ENCODE measurements at regions of chr6 and their contacts with region 1.

Region 1: DNA sequence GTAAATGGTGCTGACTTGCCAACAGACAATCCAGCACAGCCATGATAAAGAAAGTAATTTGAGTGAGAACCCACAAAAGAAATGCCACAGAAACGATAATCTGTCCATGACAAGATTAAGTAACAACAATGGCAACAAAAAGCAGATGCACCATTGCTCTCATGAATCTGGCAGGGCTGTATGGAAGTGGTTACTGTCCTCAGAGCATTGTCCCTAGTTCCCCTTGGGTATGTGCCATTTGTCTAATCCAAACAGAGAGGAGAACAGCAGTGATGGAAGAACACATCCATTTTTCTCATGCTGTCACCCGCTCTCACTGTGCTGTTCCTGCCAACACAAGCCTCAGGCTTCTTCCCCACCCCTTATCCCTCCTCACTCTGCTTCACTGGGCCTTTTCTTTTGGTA is 65.8 kb downstream of the REV3L start:
- DNase-seq: no peak
- ATAC-seq: peak; percentile 92

Region 2: DNA sequence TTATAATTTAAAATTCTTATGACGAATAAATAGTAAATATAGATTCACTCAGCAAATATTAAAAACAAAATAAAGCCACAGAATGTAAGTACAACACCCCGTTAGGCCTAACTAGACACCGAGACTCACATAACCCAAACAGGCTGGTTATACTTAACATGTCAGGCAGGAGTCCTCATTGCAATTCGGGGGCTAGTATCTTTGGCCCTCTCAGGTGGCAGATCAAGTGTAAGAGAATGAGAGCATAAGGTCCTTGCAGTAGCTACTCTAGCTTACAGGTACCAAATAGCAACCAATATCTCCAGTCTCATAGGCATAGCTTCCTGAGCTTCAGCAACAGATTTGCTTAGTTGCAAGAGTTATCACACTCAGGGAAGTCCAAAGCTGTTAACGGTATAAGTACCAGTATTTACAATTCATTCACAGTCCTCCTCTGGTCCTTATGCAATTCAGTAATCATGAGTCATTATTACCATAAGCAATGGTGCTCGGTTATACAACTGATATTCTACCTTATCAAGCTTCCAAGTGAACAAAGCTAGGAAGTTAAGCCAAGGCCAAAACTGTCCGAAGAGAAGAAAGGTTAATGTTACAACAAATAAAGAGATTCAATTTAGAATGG is 45.7 kb after region 1 on chr6:
- intact Hi-C with region 1: loop called (anchors 10 kb)
- DNase-seq: no peak
- ATAC-seq: peak; percentile 85

Measured in Right ventricle myocardium superior (tissue), 1 donor.